BJ (cell line): ENCODE measurements at regions of chr1 and their contacts with region 1.

Region 1: DNA sequence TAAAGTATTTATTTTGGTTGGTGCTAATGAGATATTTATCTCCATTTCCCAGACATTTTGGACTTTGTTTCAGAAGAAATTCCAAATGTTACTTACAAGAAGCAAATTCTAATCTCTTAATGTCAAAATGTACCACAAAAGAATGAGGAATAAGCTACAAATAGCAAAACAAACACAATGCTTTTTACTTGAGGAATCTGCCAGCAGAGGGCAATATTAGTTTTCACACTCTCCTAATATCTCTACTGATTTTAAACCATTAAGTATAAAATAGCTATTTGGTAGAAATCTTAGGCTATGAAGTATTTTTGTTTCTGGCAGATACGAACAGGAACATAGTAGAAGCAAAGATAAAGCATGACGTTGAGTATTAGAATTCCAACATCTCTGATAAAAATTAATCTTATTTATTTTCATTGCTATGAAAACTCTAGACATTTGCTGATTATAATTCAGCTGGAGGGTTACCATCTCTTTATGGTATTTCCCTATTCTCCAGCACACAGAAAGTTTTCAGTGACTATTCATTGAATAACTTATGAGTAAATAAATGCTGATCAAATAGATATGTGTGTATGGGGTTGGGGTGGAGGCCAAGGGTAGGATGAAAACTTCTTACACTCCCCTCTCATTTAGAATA is 13.4 kb upstream of the HMCN1 start:
- DNase-seq: no peak
- H3K4me3 ChIP-seq: no peak overlapping the region
- H3K27me3 ChIP-seq: no peaks in the 10 kb centered on the region
- CTCF ChIP-seq: peak; percentile 64

Region 2: GRCh38 chr1:185338719-185339622 is 381.8 kb before region 1 on chr1:
- CTCF ChIA-PET with region 1: no interaction called
- POLR2A ChIA-PET with region 1: no interaction called
- DNase-seq: no peak
- H3K4me3 ChIP-seq: no peak overlapping the region
- H3K27me3 ChIP-seq: no peaks in the 10 kb centered on the region
- CTCF ChIP-seq: no peak

Region 3: GRCh38 chr1:185695299-185695698 is 25.5 kb before region 1 on chr1:
- CTCF ChIA-PET with region 1: no interaction called
- POLR2A ChIA-PET with region 1: no interaction called
- DNase-seq: no peak
- H3K4me3 ChIP-seq: no peak overlapping the region
- H3K27me3 ChIP-seq: peaks cover 2% of the 10 kb centered on the region; the same call in 1 of the 2 replicates
- CTCF ChIP-seq: no peak

Region 4: DNA sequence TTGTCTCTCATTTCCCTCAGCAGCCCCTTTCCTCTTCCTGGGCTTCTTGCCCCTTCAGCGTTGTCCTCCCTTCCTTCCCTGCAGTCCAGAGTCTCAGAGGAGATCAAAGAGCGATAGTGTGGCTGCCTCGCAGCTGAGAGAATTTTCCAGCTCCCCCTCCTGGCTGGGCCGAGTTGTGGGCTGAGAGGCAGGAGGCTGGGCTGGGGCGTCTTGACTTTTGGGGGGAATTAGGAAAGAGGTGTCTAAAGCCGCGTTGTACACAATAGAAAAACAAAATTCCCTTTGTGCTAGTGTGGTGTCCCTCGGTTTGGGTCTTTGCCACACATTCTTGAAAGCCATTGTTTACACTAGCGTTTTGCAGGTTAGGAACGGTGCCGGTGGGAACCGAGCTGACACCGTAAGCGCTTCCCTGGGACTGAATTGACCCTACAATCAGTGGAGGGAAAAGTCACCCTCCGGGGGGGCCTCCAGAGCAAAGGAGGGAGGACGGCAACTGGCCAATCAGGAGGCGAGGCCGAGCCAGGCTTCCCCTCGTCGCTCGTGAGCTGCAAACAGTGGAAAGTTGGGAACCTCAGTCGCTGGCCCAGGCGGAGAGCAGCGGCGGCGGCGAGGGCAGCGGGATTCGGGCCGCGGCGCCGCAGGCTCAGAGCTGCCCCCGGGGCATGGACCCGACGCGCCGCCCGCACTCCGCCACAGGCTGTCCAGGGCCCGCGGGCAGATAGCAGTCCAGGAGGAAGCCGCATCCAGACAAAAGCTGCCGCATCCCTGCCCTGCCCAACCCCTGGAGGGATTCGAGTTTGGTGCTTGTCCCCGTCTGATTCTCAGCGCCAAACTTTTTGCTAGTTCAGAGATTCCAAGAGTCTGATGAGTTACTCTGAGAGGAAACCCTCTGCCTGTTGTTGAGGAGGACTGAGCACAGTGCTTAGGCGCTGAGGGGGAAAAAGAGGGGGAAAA is 13.3 kb after region 1 on chr1 and contains the start of gene HMCN1:
- CTCF ChIA-PET with region 1: interaction called, 29 read pairs
- POLR2A ChIA-PET with region 1: no interaction called
- DNase-seq: no peak
- H3K4me3 ChIP-seq: peak within 1 kb of the TSS; percentile 52
- H3K27me3 ChIP-seq: no peaks in the 10 kb centered on the region
- CTCF ChIP-seq: peak; percentile 61
- polyA plus RNA-seq, gene HMCN1: 13.3 and 16.2 TPM in 2 replicates

Region 5: DNA sequence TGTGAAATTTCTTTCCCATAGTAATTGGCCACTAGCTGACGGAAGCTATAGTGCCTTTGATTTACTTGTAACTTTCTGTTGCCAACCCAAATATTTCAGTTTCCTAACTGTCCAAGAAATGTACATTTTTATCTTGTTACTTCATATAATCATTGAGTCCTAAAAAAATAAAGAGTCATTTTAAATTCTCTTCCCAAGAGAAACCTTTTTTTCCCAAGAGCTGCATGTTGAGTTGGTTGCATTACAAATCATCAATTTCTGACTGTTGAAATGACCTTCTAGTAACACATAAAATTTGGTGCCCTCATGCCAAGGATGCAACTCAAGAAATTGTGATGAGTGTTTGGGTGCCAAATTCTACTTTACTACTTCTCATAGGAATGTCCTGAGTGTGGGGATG is 74.4 kb after region 1 on chr1:
- CTCF ChIA-PET with region 1: no interaction called
- POLR2A ChIA-PET with region 1: no interaction called
- DNase-seq: no peak
- H3K4me3 ChIP-seq: no peak overlapping the region
- H3K27me3 ChIP-seq: no peaks in the 10 kb centered on the region
- CTCF ChIP-seq: no peak